SK-N-SH (cell line): ENCODE measurements at regions of chr20 and their contacts with region 1.

Region 1: DNA sequence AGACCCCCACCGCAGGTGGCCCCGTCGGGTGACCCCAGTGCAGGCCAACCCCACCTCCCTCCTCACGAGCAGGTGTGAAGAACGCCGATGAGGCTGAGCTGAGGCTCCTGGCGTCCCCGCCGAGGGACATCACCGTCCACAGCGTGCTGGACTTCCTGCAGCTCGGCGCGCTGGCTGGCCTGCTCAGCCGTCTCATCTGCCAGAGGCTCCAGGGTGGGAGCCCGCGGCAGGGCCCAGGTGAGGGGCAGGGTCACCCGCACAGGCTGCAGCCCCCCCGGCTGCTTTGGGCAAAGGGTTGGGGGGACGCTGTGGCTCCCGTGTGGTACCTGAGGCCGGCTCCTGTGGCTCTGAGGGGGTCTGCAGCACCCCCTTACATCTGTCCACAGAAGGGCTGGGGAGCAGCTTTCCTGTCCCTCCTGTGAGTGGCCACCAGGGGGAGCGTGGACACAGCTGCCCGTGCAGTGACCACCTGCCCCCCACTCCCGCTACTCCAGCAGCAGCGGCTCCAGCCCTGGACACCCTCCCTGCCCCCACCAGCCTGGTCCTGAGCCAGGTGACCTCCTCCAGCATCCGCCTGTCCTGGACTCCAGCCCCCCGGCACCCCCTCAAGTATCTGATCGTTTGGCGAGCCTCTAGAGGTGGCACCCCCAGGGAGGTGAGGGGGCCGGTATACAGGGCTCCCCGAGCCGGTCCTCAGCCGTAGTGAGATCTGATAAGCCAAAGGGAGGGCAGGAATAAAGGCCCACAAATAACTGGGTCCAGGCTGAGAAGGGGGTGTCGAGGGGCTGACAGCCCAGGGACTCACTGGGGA is 16.5 kb downstream of the COL20A1 start:
- DNase-seq: peak; percentile 95
- H3K4me3 ChIP-seq: peak overlapping the region in 1 of 2 experiments; percentile 29; a peak in 1 of 4 replicates
- H3K27ac ChIP-seq: no peak overlapping the region
- H3K4me1 ChIP-seq: peaks cover 0 to 5% of the 10 kb centered on the region in 2 experiments; a peak in 1 of 4 replicates
- H3K27me3 ChIP-seq: no peaks in the 10 kb centered on the region
- CTCF ChIP-seq: peak; percentile 82
- EP300 ChIP-seq: no peak
- RAD21 ChIP-seq: peak; percentile 75

Region 2: DNA sequence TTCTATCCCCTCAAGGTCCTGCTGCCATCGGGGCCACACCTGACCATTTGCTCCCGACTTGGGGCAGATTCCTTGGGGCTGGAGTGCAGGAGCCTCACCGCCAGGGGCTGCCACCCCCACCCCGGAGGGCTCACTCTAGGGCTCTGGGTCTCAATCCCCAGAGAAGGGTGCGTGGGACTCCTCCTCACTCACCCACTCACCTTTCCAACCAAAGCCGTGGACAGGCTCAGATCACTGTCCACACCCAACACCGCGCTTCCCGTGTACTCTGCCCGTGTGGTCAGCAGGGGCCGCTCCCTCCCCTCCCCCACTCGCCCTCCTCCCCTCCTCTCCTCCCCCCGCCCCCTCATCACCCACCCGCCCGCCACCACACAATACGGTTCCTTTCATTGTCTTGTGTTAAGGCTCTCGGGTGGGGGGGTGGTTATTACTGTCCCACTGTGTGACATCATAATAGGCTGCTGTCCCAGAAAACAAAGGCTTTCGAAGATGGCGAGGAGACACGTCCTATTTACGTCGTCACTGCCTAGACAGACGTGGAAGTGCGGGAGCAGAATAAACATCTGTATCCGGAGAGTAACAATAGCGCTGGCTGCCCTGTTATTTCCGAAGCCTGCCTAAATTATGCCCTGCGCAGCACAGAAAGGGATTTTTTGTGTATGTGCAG is 179.3 kb before region 1 on chr20:
- CTCF ChIA-PET with region 1: no interaction called
- POLR2A ChIA-PET with region 1: no interaction called
- DNase-seq: no peak
- H3K4me3 ChIP-seq: no peak overlapping the region
- H3K27ac ChIP-seq: no peak overlapping the region
- H3K4me1 ChIP-seq: no peaks in the 10 kb centered on the region
- H3K27me3 ChIP-seq: peaks cover 34% of the 10 kb centered on the region
- CTCF ChIP-seq: no peak
- EP300 ChIP-seq: no peak
- RAD21 ChIP-seq: no peak

Region 3: GRCh38 chr20:63246490-63247288 is 62.8 kb before region 1 on chr20:
- CTCF ChIA-PET with region 1: interaction called, 11 read pairs
- POLR2A ChIA-PET with region 1: no interaction called
- DNase-seq: peak; percentile 56
- H3K4me3 ChIP-seq: no peak overlapping the region
- H3K27ac ChIP-seq: no peak overlapping the region
- H3K4me1 ChIP-seq: peaks cover 0 to 4% of the 10 kb centered on the region in 2 experiments; a peak in 1 of 4 replicates
- H3K27me3 ChIP-seq: peaks cover 4% of the 10 kb centered on the region; the same call in 1 of the 2 replicates
- CTCF ChIP-seq: no peak
- EP300 ChIP-seq: no peak
- RAD21 ChIP-seq: no peak

Region 4: DNA sequence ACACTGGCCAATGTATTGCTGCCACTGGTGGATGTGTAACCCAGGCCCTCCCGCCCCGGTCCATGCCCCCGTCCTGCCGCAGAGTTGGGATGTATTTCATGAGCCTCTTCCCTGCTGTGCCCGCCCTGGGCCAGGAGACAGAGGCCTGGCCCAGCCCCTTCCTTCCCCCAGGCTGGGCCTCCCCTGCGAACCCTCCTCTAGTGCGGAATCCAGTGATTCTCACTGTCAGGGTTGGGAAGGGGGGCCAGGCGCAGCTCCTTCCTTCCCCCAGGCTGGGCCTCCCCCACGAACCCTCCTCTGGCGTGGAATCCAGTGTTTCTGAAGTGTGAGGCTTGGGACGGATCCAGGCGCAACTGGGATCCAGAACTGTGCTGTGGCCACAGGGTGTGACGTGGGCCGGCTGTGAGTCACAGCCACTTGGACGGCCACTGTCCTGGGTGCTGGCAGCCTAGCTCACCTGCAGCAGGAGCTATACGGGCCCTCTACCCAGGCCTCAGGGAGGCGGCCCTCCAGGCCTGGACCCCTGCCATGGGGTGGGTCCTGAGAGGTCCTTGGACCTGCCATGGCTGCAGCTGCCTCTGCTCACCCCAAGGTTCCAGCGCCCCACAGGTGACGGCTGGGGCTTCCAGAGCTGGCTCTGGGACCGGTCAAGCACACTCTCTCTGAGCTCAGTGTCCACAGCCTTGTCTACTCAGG is 11.8 kb after region 1 on chr20:
- CTCF ChIA-PET with region 1: interaction called, 43 read pairs
- POLR2A ChIA-PET with region 1: no interaction called
- DNase-seq: no peak
- H3K4me3 ChIP-seq: no peak overlapping the region
- H3K27ac ChIP-seq: no peak overlapping the region
- H3K4me1 ChIP-seq: no peaks in the 10 kb centered on the region; a peak in 1 of 4 replicates
- H3K27me3 ChIP-seq: no peaks in the 10 kb centered on the region; the same call in 1 of the 2 replicates
- CTCF ChIP-seq: no peak
- EP300 ChIP-seq: no peak
- RAD21 ChIP-seq: no peak

Region 5: DNA sequence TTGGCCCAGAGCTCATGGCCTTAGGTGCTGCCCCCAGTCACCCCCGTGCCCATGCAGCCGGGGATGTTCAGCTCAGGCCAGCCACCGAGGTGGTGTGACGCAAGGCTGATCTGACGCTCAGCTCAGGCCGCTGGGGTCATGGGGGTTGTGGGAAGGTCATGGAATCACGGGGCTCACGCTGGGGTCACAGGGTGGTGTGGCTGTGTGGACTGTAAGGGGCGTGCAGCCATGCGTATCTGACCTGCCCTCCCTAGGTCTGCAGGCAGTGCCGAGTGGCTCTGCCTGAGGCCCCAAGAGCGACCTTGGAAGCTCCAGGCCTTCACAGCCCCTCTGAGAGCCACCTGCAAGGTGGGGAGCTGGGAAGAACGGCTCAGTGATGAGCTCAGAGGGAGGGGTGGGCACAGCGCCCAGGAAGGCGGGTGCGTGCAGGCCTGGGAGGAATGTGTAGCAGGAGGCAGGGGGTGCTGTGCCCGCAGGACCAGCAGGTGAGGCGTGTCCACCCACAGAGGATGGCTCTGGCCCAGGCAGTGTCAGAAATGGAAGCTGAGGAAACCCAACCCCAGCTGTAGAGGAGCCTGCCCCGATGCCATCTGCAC is 23.9 kb after region 1 on chr20:
- CTCF ChIA-PET with region 1: interaction called, 29 read pairs
- POLR2A ChIA-PET with region 1: no interaction called
- DNase-seq: no peak
- H3K4me3 ChIP-seq: no peak overlapping the region
- H3K27ac ChIP-seq: no peak overlapping the region
- H3K4me1 ChIP-seq: peaks cover 0 to 3% of the 10 kb centered on the region in 2 experiments; a peak in 1 of 4 replicates
- H3K27me3 ChIP-seq: no peaks in the 10 kb centered on the region
- CTCF ChIP-seq: no peak
- EP300 ChIP-seq: no peak
- RAD21 ChIP-seq: no peak

Region 6: DNA sequence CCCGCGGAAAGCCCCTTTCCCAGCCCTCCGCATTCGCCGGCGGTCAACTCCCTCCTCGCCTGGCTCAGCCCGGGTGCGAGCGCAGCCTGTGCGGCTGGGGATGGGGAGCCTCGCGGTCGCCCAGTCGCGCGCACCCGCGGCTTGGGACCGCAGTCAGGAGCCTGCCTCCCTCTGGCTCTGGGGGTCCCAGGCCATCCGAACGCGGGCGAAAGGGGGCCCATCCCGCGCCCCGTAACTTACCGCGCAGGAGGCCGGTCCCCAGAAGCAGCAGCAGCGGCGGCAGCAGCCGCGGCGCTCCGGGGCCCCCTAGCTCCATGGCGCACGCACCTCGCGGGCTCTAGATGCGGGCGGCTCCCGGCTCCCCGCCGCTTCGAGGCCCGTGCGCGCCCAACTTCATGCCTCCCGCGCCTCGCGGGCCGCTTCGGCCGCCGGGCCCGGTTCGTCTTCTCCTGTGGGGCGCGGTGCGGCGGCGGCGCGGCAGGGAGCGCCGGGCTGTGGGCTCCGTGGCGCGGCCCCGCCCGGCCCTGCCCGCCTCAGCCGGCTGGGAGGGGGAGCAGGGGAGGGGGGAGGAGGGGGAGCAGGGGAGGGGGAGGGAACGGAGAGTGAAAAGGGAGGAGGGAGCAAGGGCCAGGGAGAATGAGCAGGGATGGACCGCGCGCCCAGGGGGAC is 51.5 kb after region 1 on chr20 and contains the start of gene CHRNA4:
- CTCF ChIA-PET with region 1: interaction called, 30 read pairs
- POLR2A ChIA-PET with region 1: interaction called, 3 read pairs
- DNase-seq: peak; percentile 68
- H3K4me3 ChIP-seq: no peak within 1 kb of the TSS
- H3K27ac ChIP-seq: no peak within 1 kb of the TSS
- H3K4me1 ChIP-seq: no peaks in the 10 kb centered on the region; a peak in 1 of 4 replicates
- H3K27me3 ChIP-seq: no peaks in the 10 kb centered on the region
- CTCF ChIP-seq: no peak
- EP300 ChIP-seq: no peak
- RAD21 ChIP-seq: no peak
- polyA plus RNA-seq, gene CHRNA4: not detected in 2 replicates

Region 7: GRCh38 chr20:63381807-63382322 is 72.4 kb after region 1 on chr20:
- CTCF ChIA-PET with region 1: interaction called, 460 read pairs
- POLR2A ChIA-PET with region 1: interaction called, 3 read pairs
- DNase-seq: peak; percentile 94
- H3K4me3 ChIP-seq: peak overlapping the region in 1 of 2 experiments; percentile 57; a peak in 1 of 4 replicates
- H3K27ac ChIP-seq: no peak overlapping the region
- H3K4me1 ChIP-seq: no peaks in the 10 kb centered on the region; a peak in 1 of 4 replicates
- H3K27me3 ChIP-seq: no peaks in the 10 kb centered on the region
- CTCF ChIP-seq: peak; percentile 79
- EP300 ChIP-seq: no peak
- RAD21 ChIP-seq: peak; percentile 87

Region 8: DNA sequence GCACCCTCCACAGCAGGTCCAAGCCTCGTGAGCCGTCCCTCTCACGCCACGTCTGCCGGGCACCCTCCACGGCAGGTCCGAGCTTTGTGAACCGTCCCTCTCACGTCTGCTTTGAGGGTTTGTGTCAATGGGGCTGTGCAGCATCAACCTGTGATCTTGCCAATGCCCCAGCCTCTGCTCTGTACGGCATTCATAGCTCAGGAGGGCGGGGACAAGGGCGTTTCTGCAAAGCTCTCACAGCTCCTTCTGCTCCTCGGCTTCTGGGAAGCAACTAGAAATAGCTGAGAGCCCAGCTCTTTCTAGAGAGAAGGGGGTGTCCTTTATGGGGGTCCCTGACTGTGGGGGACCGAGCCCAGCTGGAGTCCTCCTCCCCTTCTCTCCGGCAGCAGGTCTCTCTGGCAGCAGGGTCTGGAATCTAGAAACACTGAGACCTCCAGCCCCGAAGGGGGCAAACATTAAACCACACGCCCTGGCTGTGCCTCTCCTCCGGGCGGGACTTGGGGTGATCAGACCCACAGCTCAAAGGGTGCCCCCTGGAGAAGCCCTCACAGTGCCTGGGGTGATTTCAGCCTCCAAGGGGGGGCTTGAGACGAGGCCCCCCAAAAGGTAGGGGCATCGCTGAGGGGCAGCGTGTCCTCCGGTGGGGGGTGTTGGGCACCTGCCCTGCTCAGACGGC is 92.9 kb after region 1 on chr20:
- CTCF ChIA-PET with region 1: interaction called, 27 read pairs
- POLR2A ChIA-PET with region 1: no interaction called
- DNase-seq: no peak
- H3K4me3 ChIP-seq: no peak overlapping the region
- H3K27ac ChIP-seq: no peak overlapping the region
- H3K4me1 ChIP-seq: peaks cover 0 to 38% of the 10 kb centered on the region in 2 experiments; a peak in 1 of 4 replicates
- H3K27me3 ChIP-seq: peaks cover 38% of the 10 kb centered on the region
- CTCF ChIP-seq: no peak
- EP300 ChIP-seq: no peak
- RAD21 ChIP-seq: no peak

Region 9: GRCh38 chr20:63520504-63520933 is 211.1 kb after region 1 on chr20 and contains the start of gene PPDPF:
- CTCF ChIA-PET with region 1: no interaction called
- POLR2A ChIA-PET with region 1: no interaction called
- DNase-seq: peak; percentile 100
- H3K4me3 ChIP-seq: peak within 1 kb of the TSS; percentile 84 to 85
- H3K27ac ChIP-seq: peak within 1 kb of the TSS; percentile 66 to 81
- H3K4me1 ChIP-seq: peaks cover 4 to 26% of the 10 kb centered on the region in 2 experiments; a peak in 3 of 4 replicates
- H3K27me3 ChIP-seq: no peaks in the 10 kb centered on the region
- CTCF ChIP-seq: no peak
- EP300 ChIP-seq: no peak
- RAD21 ChIP-seq: no peak
- polyA plus RNA-seq, gene PPDPF: 20.0 and 71.4 TPM in 2 replicates